B cell (primary cell): ENCODE measurements at regions of chr2 and their contacts with region 1.

Region 1: DNA sequence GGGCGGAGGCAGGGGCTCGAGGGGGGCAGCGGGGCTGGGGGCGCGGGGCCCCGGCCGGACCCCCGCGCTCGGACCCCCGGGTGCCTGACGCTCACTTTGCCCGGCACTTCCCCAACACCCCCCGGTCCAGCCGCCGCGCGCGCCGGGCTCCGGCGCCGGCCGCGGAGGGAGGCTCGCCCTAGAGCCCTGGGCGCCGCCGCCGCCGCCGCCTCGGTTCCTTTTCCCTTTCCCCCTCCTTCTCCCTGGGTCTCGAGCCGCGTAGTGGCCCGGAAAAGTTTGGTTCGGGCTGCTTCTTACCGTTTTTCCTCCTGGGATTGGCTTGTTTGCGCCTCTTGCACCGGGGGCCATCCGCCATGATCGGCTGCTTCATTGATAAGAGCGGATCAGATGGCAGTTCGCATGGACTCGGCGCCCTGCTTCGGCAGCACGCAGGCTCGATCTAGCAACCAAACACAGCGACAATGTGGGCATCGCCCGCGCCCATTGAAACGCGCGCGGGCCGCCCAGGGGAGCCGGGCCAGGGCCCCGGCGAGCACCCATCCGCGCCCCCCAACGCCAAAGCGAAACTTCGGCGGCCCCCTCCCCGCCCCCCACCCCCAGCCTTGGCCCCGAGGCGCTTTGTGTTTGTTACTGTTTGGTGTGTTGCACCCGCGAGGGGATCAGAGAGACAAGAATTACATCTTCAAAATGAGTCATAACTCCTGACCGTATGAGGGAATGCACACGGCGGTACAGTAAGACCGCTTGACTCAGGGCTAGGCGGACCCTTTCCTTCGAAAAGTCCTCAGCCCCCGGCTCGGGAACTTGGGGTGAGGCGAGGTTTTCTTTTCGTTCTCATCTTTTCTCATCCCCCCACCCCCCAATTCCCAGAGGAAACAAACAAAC is 2.7 kb downstream of the ZEB2 start:
- DNase-seq: peak; percentile 75
- ATAC-seq: peak; percentile 48
- H3K4me3 ChIP-seq: peak overlapping the region; percentile 75 to 100 (median 94)
- H3K4me3 Mint-ChIP-seq: no peak overlapping the region
- H3K27ac ChIP-seq: peak overlapping the region; percentile 75 to 92
- H3K27ac Mint-ChIP-seq: no peak overlapping the region
- H3K4me1 ChIP-seq: peaks cover 31 to 49% of the 10 kb centered on the region in 2 donors
- H3K4me1 Mint-ChIP-seq: peaks cover 50% of the 10 kb centered on the region
- H3K27me3 ChIP-seq: peaks cover 0 to 3% (median under 1%) of the 10 kb centered on the region in 4 experiments
- H3K27me3 Mint-ChIP-seq: no peaks in the 10 kb centered on the region
- CTCF ChIP-seq: no peak

Region 2: DNA sequence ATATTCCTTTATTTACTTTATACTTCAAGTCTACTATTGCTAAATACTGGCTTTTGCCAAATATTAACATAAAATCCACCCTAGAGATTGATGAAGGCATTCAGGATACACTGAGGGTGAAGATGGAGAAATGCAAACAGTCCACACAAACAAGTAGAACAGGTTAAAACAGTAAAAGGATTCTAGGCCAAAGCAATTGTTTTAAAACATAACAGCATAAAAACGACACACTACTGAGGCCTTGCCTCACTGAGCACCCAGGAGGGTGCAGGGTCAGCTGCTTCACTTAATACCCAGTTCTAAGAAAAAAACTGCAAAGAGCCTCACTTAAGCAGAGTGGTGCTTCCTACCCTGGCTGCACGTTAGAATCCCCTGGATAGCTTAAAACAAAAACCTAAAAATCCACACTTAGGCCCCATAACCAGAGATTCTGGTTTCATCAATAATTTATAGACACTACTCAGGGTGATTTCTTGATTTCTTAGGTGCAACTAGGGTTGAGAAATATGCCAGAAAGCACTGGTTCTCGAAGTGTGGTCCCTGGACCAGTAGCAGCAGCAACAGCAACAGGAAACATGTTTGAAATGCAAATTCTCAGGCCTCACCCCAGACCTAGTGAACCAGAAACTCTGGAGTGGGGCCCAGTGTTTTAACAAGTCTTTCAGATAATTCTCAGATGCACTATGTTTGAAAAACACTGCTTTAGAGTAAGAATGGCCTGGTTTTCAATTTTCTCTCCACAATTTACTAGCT is 276.5 kb before region 1 on chr2:
- CTCF ChIA-PET with region 1: no interaction called
- POLR2A ChIA-PET with region 1: no interaction called
- intact Hi-C with region 1: loop called (anchors 10 kb)
- DNase-seq: peak; percentile 61
- ATAC-seq: peak; percentile 82
- H3K4me3 ChIP-seq: peak overlapping the region in 3 of 5 experiments; percentile 18 to 28 (median 25)
- H3K4me3 Mint-ChIP-seq: peak overlapping the region; percentile 77
- H3K27ac ChIP-seq: peak overlapping the region; percentile 67 to 83
- H3K27ac Mint-ChIP-seq: peak overlapping the region; percentile 91
- H3K4me1 ChIP-seq: peaks cover 59 to 62% of the 10 kb centered on the region in 2 donors
- H3K4me1 Mint-ChIP-seq: peaks cover 77% of the 10 kb centered on the region
- H3K27me3 ChIP-seq: no peaks in the 10 kb centered on the region
- H3K27me3 Mint-ChIP-seq: no peaks in the 10 kb centered on the region
- CTCF ChIP-seq: no peak

Region 3: DNA sequence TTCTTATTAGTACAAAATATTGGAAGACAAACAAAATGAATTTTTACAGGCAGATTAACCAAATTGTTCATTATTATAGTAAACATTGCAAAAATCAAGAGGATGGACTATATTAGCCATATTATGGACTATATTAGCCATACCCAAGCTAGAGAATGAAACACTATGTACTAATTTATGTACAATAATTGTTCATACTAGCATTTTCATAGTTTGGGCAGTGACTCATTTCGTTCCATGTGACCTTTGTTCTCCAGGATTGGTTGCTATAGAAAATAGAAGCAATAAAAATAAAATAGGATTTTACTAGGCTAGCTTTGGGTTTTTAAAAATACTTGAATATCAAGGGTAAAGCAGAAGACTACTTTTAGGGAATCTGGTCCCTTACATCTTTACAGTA is 174.1 kb before region 1 on chr2:
- CTCF ChIA-PET with region 1: no interaction called
- POLR2A ChIA-PET with region 1: no interaction called
- intact Hi-C with region 1: no loop called
- DNase-seq: no peak
- ATAC-seq: no peak
- H3K4me3 ChIP-seq: no peak overlapping the region
- H3K4me3 Mint-ChIP-seq: no peak overlapping the region
- H3K27ac ChIP-seq: no peak overlapping the region
- H3K27ac Mint-ChIP-seq: no peak overlapping the region
- H3K4me1 ChIP-seq: peaks cover 3% of the 10 kb centered on the region in 2 donors
- H3K4me1 Mint-ChIP-seq: peaks cover 11% of the 10 kb centered on the region
- H3K27me3 ChIP-seq: no peaks in the 10 kb centered on the region
- H3K27me3 Mint-ChIP-seq: no peaks in the 10 kb centered on the region
- CTCF ChIP-seq: no peak

Region 4: GRCh38 chr2:144449028-144449406 is 68.2 kb before region 1 on chr2:
- CTCF ChIA-PET with region 1: interaction called, 10 read pairs
- POLR2A ChIA-PET with region 1: no interaction called
- intact Hi-C with region 1: loop called (anchors 5 kb)
- DNase-seq: peak; percentile 43
- ATAC-seq: peak; percentile 53
- H3K4me3 ChIP-seq: peak overlapping the region in 2 of 5 experiments; percentile 20 to 22
- H3K4me3 Mint-ChIP-seq: peak overlapping the region; percentile 69
- H3K27ac ChIP-seq: peak overlapping the region in 1 of 2 donors; percentile 17
- H3K27ac Mint-ChIP-seq: peak overlapping the region; percentile 70
- H3K4me1 ChIP-seq: peaks cover 25 to 38% of the 10 kb centered on the region in 2 donors
- H3K4me1 Mint-ChIP-seq: peaks cover 76% of the 10 kb centered on the region
- H3K27me3 ChIP-seq: no peaks in the 10 kb centered on the region
- H3K27me3 Mint-ChIP-seq: no peaks in the 10 kb centered on the region
- CTCF ChIP-seq: no peak

Region 5: GRCh38 chr2:144548532-144549191 is 31.4 kb after region 1 on chr2:
- CTCF ChIA-PET with region 1: no interaction called
- POLR2A ChIA-PET with region 1: no interaction called
- intact Hi-C with region 1: loop called (anchors 2 kb)
- DNase-seq: peak; percentile 79
- ATAC-seq: peak; percentile 97
- H3K4me3 ChIP-seq: peak overlapping the region in 1 of 5 experiments; percentile 4
- H3K4me3 Mint-ChIP-seq: peak overlapping the region; percentile 56
- H3K27ac ChIP-seq: no peak overlapping the region
- H3K27ac Mint-ChIP-seq: peak overlapping the region; percentile 42
- H3K4me1 ChIP-seq: peaks cover 21 to 26% of the 10 kb centered on the region in 2 donors
- H3K4me1 Mint-ChIP-seq: peaks cover 22% of the 10 kb centered on the region
- H3K27me3 ChIP-seq: peaks cover 0 to 32% (median 18%) of the 10 kb centered on the region in 4 experiments
- H3K27me3 Mint-ChIP-seq: peaks cover 31% of the 10 kb centered on the region
- CTCF ChIP-seq: no peak

Region 6: DNA sequence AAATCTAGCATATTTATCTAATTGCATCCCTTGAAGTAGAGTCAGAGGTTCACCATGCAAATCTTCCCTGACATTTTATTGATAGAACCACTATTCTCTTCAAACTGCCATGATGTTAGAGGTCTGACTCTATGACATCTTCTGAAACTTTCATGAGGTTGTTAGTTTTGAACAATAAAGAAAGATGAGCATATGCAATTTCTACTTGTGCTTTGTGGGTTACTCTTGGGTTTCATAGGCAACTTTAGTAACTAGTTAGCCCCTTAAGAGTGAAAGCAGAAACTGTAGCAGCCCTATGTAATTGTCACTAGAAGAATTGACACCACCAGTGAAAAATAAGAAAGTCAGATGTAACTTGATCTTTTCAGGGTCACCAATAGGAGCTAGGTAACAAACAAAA is 55.8 kb after region 1 on chr2:
- CTCF ChIA-PET with region 1: no interaction called
- POLR2A ChIA-PET with region 1: no interaction called
- intact Hi-C with region 1: no loop called
- DNase-seq: no peak
- ATAC-seq: no peak
- H3K4me3 ChIP-seq: no peak overlapping the region
- H3K4me3 Mint-ChIP-seq: no peak overlapping the region
- H3K27ac ChIP-seq: no peak overlapping the region
- H3K27ac Mint-ChIP-seq: no peak overlapping the region
- H3K4me1 ChIP-seq: no peaks in the 10 kb centered on the region
- H3K4me1 Mint-ChIP-seq: peaks cover 4% of the 10 kb centered on the region
- H3K27me3 ChIP-seq: no peaks in the 10 kb centered on the region
- H3K27me3 Mint-ChIP-seq: no peaks in the 10 kb centered on the region
- CTCF ChIP-seq: no peak

Region 7: DNA sequence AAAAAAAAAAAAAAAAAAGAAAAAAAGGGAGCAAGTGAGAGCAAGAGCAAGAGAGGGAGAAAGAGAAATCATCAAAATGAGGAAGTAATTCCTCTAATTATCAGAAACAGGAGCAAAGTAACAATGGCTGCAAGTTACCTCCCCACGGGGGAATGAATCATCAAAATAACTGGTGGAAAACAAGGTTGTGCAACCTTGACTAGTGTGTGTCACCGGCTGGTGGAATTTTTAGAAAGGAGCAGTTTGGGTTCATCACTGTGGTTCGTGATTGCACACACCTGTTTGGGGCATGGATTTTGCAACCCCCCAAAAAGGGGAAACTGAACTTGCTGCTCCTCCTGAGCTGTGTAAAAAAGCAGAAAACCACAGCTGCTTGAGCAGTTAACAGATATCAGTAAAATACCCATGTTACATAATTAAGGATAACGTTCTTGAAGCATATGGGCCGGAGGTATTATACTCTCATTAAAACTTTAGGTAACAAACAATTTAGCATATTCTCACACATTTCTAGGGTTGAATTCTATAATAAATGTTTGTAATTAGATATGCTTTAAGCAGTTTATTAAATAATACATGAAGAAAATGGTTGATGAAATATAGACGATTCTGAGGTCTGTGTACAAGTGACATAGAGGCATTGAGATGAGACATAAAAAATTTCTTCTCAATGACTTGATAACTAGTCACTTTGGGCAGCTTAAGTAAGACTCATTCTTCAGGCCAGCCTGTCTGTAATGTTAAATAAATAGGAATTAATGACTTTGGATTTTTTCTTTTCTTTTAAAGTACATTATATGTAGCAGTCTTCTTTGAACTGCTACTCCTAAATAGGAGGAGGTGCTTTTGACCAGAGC is 186.9 kb after region 1 on chr2:
- CTCF ChIA-PET with region 1: no interaction called
- POLR2A ChIA-PET with region 1: no interaction called
- intact Hi-C with region 1: loop called (anchors 2 kb)
- DNase-seq: peak; percentile 72
- ATAC-seq: peak; percentile 87
- H3K4me3 ChIP-seq: peak overlapping the region in 3 of 5 experiments; percentile 12 to 23 (median 17)
- H3K4me3 Mint-ChIP-seq: peak overlapping the region; percentile 50
- H3K27ac ChIP-seq: peak overlapping the region; percentile 9 to 36
- H3K27ac Mint-ChIP-seq: peak overlapping the region; percentile 70
- H3K4me1 ChIP-seq: peaks cover 41 to 42% of the 10 kb centered on the region in 2 donors
- H3K4me1 Mint-ChIP-seq: peaks cover 46% of the 10 kb centered on the region
- H3K27me3 ChIP-seq: no peaks in the 10 kb centered on the region
- H3K27me3 Mint-ChIP-seq: no peaks in the 10 kb centered on the region
- CTCF ChIP-seq: no peak